ENCODE measurements at regions of chr11 and their contacts with region 1.

Region 1: GRCh38 chr11:95699631-95700470 is 89.7 kb downstream of the FAM76B start:
- DNase-seq: no peak
- H3K4me3 ChIP-seq: no peak overlapping the region
- H3K27ac ChIP-seq: peak overlapping the region in 1 of 4 donors; percentile 43
- H3K4me1 ChIP-seq: peaks cover 14 to 68% (median 60%) of the 10 kb centered on the region in 4 donors
- H3K27me3 ChIP-seq: no peaks in the 10 kb centered on the region
- CTCF ChIP-seq: no peak
- EP300 ChIP-seq: no peak
- POLR2A ChIP-seq: no peak

Region 2: GRCh38 chr11:95067039-95067840 is 632.6 kb before region 1 on chr11:
- intact Hi-C with region 1: loop called (anchors 5 kb)
- DNase-seq: peak; percentile 95
- H3K4me3 ChIP-seq: peak overlapping the region; percentile 78 to 89 (median 84)
- H3K27ac ChIP-seq: peak overlapping the region; percentile 97 to 98 (median 98)
- H3K4me1 ChIP-seq: peaks cover 11 to 28% (median 26%) of the 10 kb centered on the region in 4 donors
- H3K27me3 ChIP-seq: peaks cover 0 to 7% (median 0%) of the 10 kb centered on the region in 4 donors
- CTCF ChIP-seq: peak; percentile 29 to 75 (median 45)
- EP300 ChIP-seq: no peak
- POLR2A ChIP-seq: no peak

Region 3: GRCh38 chr11:95231127-95231880 is 468.5 kb before region 1 on chr11 and contains the start of gene SESN3:
- intact Hi-C with region 1: loop called (anchors 2 kb)
- DNase-seq: peak; percentile 99
- H3K4me3 ChIP-seq: peak within 1 kb of the TSS; percentile 82 to 93 (median 88)
- H3K27ac ChIP-seq: peak within 1 kb of the TSS; percentile 85 to 92 (median 88)
- H3K4me1 ChIP-seq: peaks cover 14 to 37% (median 34%) of the 10 kb centered on the region in 4 donors
- H3K27me3 ChIP-seq: no peaks in the 10 kb centered on the region
- CTCF ChIP-seq: peak; percentile 10 to 32 (median 18)
- EP300 ChIP-seq: no peak
- POLR2A ChIP-seq: peak; percentile 58
- total RNA-seq, gene SESN3: 18.1 to 22.7 (median 21.4) TPM

Region 4: DNA sequence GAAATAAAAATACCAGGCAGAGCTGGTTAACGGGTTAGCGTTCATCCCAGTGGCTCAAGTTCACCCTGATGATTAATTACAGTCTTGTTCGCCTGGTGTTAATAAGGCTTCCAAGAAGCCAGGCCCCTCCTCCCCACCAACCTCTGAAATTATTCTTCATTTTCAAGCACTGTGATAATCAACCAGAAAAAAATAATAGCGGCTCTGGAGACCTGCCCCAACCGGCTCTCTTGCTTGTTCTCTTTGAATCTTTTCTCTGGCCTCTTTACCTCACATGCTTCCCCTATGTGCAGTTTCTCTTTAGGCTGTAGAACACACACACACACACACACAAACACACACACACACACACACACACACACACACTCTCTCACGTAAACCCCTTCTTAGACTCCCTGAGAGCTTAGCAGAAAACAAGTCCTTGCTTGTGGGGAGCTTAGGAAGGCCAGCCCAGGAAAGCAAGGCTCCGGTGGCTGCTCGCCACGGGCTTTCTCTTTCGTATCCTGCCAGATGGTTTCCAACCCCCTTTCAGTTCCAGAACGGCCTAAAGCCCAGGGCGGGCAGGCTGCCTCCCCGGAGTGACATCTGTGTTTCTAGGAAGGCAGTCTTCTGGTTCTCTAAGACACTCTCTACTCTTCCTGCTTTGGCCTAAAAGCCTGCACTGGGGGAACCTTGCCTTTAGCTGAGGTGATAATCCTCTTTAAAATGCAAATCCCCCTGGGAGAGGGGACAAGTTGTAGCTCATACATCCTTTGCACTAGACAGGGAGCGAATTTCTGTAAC is 362.5 kb before region 1 on chr11:
- intact Hi-C with region 1: loop called (anchors 5 kb)
- DNase-seq: peak; percentile 92
- H3K4me3 ChIP-seq: peak overlapping the region; percentile 13 to 32 (median 25)
- H3K27ac ChIP-seq: peak overlapping the region; percentile 82 to 88 (median 86)
- H3K4me1 ChIP-seq: peaks cover 33 to 52% (median 43%) of the 10 kb centered on the region in 4 donors
- H3K27me3 ChIP-seq: no peaks in the 10 kb centered on the region
- CTCF ChIP-seq: no peak
- EP300 ChIP-seq: no peak
- POLR2A ChIP-seq: no peak

Region 5: GRCh38 chr11:95499516-95500135 is 200.2 kb before region 1 on chr11:
- intact Hi-C with region 1: loop called (anchors 5 kb)
- DNase-seq: peak; percentile 50
- H3K4me3 ChIP-seq: no peak overlapping the region
- H3K27ac ChIP-seq: no peak overlapping the region
- H3K4me1 ChIP-seq: peaks cover 0 to 29% (median 16%) of the 10 kb centered on the region in 4 donors
- H3K27me3 ChIP-seq: no peaks in the 10 kb centered on the region
- CTCF ChIP-seq: no peak
- EP300 ChIP-seq: no peak
- POLR2A ChIP-seq: no peak

Region 6: DNA sequence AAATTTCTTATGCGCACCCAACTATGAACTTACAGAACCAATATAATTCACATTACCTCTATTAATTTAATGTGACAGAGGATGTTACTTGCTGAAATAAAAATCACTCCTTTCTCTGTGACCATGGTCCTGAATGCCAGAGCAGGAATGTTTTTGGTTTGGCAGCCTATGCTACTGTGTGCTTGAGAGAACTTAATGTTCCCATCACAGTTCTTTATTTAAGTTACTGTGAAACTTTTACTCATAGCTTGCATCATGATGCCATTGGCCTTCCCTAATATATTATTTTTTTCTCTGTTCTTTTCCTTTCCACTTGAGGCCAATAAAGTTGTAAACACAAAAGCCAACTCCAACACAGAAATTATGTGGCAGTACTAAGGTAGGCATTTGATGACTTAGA is 52.5 kb before region 1 on chr11:
- intact Hi-C with region 1: loop called (anchors 5 kb)
- DNase-seq: no peak
- H3K4me3 ChIP-seq: peak overlapping the region in 2 of 4 donors; percentile 8 to 13
- H3K27ac ChIP-seq: peak overlapping the region; percentile 72 to 85 (median 80)
- H3K4me1 ChIP-seq: peaks cover 7 to 40% (median 26%) of the 10 kb centered on the region in 4 donors
- H3K27me3 ChIP-seq: no peaks in the 10 kb centered on the region
- CTCF ChIP-seq: no peak
- EP300 ChIP-seq: peak; percentile 40
- POLR2A ChIP-seq: no peak

Measured in esophagus muscularis mucosa (tissue), 4 donors.